Calu3 (cell line): ENCODE measurements at regions of chr9 and their contacts with region 1.

Region 1: DNA sequence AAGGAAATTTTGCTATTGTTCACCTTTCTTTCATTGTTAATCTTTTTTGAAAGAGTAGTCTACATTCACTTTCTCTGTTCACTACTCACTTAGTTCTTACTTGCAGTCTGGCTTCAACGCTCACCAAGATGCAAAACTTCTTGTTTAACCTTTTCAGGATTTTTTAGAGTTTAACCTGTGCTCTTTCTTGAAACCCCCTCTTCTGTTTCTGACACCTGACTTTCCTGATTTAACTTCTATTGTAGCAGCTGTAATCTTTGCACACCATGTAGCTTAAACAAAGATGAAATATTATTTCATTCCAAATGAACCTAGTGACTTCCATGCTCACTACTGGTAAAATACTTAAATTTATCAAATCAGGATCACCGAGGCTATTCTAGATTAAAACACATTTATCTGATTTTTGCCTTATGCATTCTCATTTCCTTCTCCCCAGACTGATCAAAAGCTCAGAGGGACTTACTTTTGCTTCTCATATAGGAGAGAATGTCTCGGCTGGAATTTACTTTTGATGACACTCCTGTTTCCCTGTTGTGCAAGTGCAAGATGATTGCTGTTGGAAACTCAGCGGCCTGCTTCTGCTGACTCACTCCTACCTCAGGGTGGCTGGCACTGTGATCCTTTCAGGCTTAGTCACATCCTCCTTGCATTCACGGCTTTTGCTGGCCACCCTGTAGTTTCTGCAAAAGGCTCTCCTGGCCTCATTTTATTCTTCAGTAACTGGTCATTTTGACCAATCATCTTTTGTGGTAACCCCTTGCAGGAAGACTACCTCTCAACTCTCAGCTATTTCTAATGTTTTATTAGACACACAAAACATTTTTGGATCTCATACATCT is 109.3 kb upstream of the IFNE start:
- DNase-seq: peak; percentile 78
- H3K4me3 Mint-ChIP-seq: peak overlapping the region; percentile 77
- H3K27ac Mint-ChIP-seq: peak overlapping the region; percentile 81
- H3K4me1 Mint-ChIP-seq: peaks cover 39% of the 10 kb centered on the region
- H3K27me3 Mint-ChIP-seq: no peaks in the 10 kb centered on the region
- CTCF ChIP-seq: no peak

Region 2: DNA sequence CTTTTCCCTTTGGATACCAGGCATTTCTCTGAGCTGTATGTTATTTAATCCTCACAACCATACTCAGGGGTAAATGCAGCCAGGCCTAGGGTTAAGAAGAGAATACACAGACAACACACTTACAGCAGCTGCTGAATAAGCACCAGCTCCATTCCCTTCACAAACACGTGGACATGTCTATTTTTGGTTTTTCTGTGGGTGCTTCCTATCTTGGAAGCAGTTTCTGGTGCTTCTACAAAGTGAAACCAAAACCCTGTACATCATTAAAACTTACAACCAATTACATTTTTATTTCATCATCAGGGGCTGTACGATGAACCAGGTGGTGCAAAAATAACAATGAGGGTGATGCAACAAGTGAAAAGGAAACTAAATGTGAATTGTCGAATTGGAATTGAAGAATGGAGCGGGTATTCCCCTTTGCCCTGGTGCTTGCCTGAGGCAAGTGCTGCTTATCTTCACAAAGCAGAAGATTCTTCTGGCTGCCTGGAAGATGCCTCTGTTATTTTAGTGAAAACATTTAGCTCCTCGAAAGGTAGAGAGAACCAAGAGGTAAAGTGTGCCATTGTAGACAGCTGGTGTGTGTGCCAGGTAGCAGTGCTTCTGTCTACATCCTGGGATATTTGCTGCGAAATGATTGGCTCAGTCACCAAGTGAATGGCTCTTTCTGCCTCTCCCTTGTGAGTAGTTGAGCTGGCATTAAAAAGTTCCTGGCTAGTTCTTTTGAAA is 495.1 kb before region 1 on chr9:
- CTCF ChIA-PET with region 1: no interaction called
- intact Hi-C with region 1: no loop called
- DNase-seq: peak; percentile 7
- H3K4me3 Mint-ChIP-seq: peak overlapping the region; percentile 54
- H3K27ac Mint-ChIP-seq: peak overlapping the region; percentile 89
- H3K4me1 Mint-ChIP-seq: peaks cover 26% of the 10 kb centered on the region
- H3K27me3 Mint-ChIP-seq: no peaks in the 10 kb centered on the region
- CTCF ChIP-seq: no peak

Region 3: GRCh38 chr9:21465859-21466518 is 125.5 kb before region 1 on chr9:
- CTCF ChIA-PET with region 1: no interaction called
- intact Hi-C with region 1: loop called (anchors 5 kb)
- DNase-seq: peak; percentile 15
- H3K4me3 Mint-ChIP-seq: no peak overlapping the region
- H3K27ac Mint-ChIP-seq: no peak overlapping the region
- H3K4me1 Mint-ChIP-seq: no peaks in the 10 kb centered on the region
- H3K27me3 Mint-ChIP-seq: no peaks in the 10 kb centered on the region
- CTCF ChIP-seq: peak; percentile 39

Region 4: DNA sequence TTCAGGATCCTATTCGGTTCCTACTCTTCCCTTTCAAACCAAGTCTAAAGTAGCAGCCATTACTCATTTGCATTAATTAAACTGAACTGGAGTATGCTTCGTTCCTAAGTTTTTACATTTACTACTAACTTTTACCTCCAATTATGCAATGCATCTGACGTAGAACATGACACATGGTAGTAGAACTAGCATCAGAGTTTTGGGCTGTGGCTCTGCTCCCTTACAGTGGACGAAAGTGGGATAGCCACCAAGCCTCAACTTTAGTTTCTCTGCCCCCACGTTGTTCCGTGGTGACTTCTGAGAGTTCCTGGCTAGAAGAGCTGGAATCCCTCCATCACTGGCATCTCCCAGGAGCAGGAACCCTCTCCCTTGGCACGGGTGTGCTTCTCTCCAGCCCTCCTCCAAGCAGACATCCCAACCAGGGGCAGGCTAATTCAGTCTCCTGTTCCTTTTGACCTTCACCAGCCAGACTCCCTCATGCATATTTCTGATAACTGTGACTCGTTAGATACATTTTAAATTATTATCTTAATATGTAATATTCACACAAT is 112.2 kb before region 1 on chr9:
- CTCF ChIA-PET with region 1: no interaction called
- intact Hi-C with region 1: no loop called
- DNase-seq: no peak
- H3K4me3 Mint-ChIP-seq: no peak overlapping the region
- H3K27ac Mint-ChIP-seq: no peak overlapping the region
- H3K4me1 Mint-ChIP-seq: no peaks in the 10 kb centered on the region
- H3K27me3 Mint-ChIP-seq: no peaks in the 10 kb centered on the region
- CTCF ChIP-seq: no peak

Region 5: GRCh38 chr9:21527579-21527978 is 63.9 kb before region 1 on chr9:
- CTCF ChIA-PET with region 1: no interaction called
- intact Hi-C with region 1: no loop called
- DNase-seq: no peak
- H3K4me3 Mint-ChIP-seq: no peak overlapping the region
- H3K27ac Mint-ChIP-seq: peak overlapping the region; percentile 83
- H3K4me1 Mint-ChIP-seq: no peaks in the 10 kb centered on the region
- H3K27me3 Mint-ChIP-seq: no peaks in the 10 kb centered on the region
- CTCF ChIP-seq: no peak

Region 6: GRCh38 chr9:21672761-21673160 is 81.3 kb after region 1 on chr9:
- CTCF ChIA-PET with region 1: no interaction called
- intact Hi-C with region 1: loop called (anchors 2 kb)
- DNase-seq: no peak
- H3K4me3 Mint-ChIP-seq: peak overlapping the region; percentile 55
- H3K27ac Mint-ChIP-seq: peak overlapping the region; percentile 95
- H3K4me1 Mint-ChIP-seq: peaks cover 48% of the 10 kb centered on the region
- H3K27me3 Mint-ChIP-seq: no peaks in the 10 kb centered on the region
- CTCF ChIP-seq: no peak